GM12878 (cell line): ENCODE measurements at regions of chr14 and their contacts with region 1.

Region 1: DNA sequence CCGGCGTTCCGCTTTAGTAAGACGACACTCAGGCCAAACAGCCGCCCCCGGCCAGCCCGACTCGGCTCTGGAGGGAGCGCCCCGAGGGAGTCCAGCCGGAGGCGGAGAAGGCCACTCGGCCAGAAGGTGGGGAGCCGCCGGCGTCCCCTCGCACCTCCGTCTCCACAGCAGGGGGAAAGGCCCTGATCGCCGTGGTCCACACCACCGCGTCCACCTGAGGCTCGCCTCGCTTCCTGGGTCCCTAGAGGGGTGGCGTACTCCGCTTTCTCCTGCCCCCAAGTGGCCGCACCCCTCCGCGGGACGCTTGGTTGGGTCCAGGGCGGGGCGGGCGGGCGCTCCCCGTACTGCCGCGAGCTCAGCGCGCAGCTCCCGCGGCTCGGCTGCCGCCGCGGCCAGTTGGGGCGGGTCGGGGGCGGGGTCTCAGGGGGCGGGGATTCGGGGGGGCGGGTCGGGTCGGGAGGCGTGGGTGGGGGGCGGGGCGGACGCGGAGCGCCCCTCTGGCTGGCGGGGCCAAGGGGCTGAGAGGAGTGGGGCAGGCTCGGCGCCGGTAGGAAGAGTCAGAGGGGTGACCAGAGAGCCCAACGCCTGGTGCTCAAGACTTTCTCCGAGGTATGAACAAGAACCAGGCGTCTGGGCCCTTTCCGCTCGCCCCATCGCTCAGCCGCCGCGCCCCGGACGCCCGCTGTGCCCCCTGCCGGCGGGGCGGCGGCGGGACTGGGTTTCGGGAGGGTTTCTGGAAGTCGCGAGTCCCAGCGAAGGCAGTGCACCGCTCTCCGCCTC is at the start of gene FRMD6:
- DNase-seq: peak; percentile 26
- ATAC-seq: peak; percentile 90
- H3K4me3 ChIP-seq: peak within 1 kb of the TSS; percentile 84
- H3K27ac ChIP-seq: peak within 1 kb of the TSS; percentile 41
- H3K4me1 ChIP-seq: no peaks in the 10 kb centered on the region
- H3K27me3 ChIP-seq: peaks cover 3 to 9% of the 10 kb centered on the region in 2 experiments; a peak in 3 of 4 replicates
- CTCF ChIP-seq: peak; percentile 54 to 80 (median 68)
- EP300 ChIP-seq: no peak
- POLR2A ChIP-seq: peak; percentile 82; the same call in 1 of the 2 replicates
- RAD21 ChIP-seq: peak; percentile 59
- polyA plus RNA-seq, gene FRMD6: 1.1 to 1.6 TPM

Region 2: GRCh38 chr14:51283402-51284085 is 368.0 kb before region 1 on chr14:
- CTCF ChIA-PET with region 1: interaction called, 4 read pairs
- POLR2A ChIA-PET with region 1: no interaction called
- RAD21 ChIA-PET with region 1: no interaction called
- SMC1A ChIA-PET with region 1: no interaction called
- in situ Hi-C with region 1: no loop called
- intact Hi-C with region 1: loop called (anchors 5 kb)
- DNase-seq: no peak
- ATAC-seq: peak; percentile 55; the same call in 2 of the 3 replicates
- H3K4me3 ChIP-seq: no peak overlapping the region
- H3K27ac ChIP-seq: no peak overlapping the region
- H3K4me1 ChIP-seq: peaks cover 8% of the 10 kb centered on the region
- H3K27me3 ChIP-seq: no peaks in the 10 kb centered on the region
- CTCF ChIP-seq: peak; percentile 53 to 74 (median 55); a peak in 5 of 6 replicates
- EP300 ChIP-seq: no peak
- POLR2A ChIP-seq: no peak
- RAD21 ChIP-seq: peak; percentile 71

Region 3: DNA sequence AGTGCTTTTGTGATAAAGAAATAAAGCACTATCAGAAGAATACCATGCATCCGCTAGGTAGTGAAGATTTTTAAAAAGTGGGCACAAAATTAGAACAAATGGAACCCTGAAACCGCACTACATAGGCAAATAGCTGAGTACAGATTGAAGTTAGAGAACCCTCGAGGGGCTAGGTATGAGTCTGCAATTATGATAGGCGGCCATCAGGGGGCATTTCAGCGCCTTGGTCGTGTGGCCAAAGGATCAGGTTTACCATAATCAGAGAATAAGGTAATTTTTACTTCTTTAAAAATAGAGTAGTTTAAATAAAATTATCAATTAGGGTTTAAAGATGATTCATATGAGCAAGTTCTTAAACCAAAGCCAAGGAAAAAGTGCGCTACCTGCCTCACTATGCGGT is 281.8 kb before region 1 on chr14:
- CTCF ChIA-PET with region 1: no interaction called
- POLR2A ChIA-PET with region 1: no interaction called
- RAD21 ChIA-PET with region 1: no interaction called
- SMC1A ChIA-PET with region 1: no interaction called
- in situ Hi-C with region 1: no loop called
- intact Hi-C with region 1: loop called (anchors 5 kb)
- DNase-seq: no peak
- ATAC-seq: peak; percentile 42; the same call in 2 of the 3 replicates
- H3K4me3 ChIP-seq: no peak overlapping the region
- H3K27ac ChIP-seq: no peak overlapping the region
- H3K4me1 ChIP-seq: no peaks in the 10 kb centered on the region
- H3K27me3 ChIP-seq: no peaks in the 10 kb centered on the region
- CTCF ChIP-seq: peak; percentile 28 to 45 (median 44); a peak in 5 of 6 replicates
- EP300 ChIP-seq: no peak
- POLR2A ChIP-seq: no peak
- RAD21 ChIP-seq: peak; percentile 61

Region 4: DNA sequence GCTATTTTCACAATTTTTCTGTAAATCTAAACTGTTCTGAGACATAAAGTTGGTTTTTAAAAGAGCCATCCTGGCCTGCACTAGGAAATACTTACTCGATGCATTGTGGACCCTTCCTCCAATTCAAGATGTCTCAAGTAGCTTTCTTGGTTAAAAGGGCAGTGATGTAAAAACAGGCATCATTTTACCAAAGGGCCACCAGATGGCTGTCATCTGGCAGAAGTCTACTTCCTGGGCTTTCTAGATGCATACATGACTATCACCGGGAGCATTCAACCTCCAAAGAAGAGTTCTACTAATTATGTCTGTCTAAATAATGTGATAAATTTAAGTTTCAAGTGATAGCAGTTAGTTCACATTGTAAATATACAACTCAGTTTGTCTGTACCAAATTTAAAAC is 96.6 kb before region 1 on chr14:
- CTCF ChIA-PET with region 1: no interaction called
- POLR2A ChIA-PET with region 1: no interaction called
- RAD21 ChIA-PET with region 1: no interaction called
- SMC1A ChIA-PET with region 1: no interaction called
- in situ Hi-C with region 1: no loop called
- intact Hi-C with region 1: loop called (anchors 5 kb)
- DNase-seq: no peak
- ATAC-seq: peak; percentile 37; the same call in 2 of the 3 replicates
- H3K4me3 ChIP-seq: no peak overlapping the region
- H3K27ac ChIP-seq: no peak overlapping the region
- H3K4me1 ChIP-seq: no peaks in the 10 kb centered on the region
- H3K27me3 ChIP-seq: peaks cover 2 to 3% of the 10 kb centered on the region in 2 experiments; a peak in 2 of 4 replicates
- CTCF ChIP-seq: peak in 2 of 3 experiments; percentile 28 to 29; a peak in 4 of 6 replicates
- EP300 ChIP-seq: no peak
- POLR2A ChIP-seq: no peak
- RAD21 ChIP-seq: peak; percentile 55

Region 5: GRCh38 chr14:51989293-51990234 is 338.0 kb after region 1 on chr14 and contains the start of gene RTRAF:
- CTCF ChIA-PET with region 1: no interaction called
- POLR2A ChIA-PET with region 1: no interaction called
- RAD21 ChIA-PET with region 1: no interaction called
- SMC1A ChIA-PET with region 1: no interaction called
- in situ Hi-C with region 1: no loop called
- intact Hi-C with region 1: loop called (anchors 10 kb)
- DNase-seq: peak; percentile 69
- ATAC-seq: peak; percentile 95
- H3K4me3 ChIP-seq: peak within 1 kb of the TSS; percentile 89
- H3K27ac ChIP-seq: peak within 1 kb of the TSS; percentile 88
- H3K4me1 ChIP-seq: peaks cover 6% of the 10 kb centered on the region
- H3K27me3 ChIP-seq: no peaks in the 10 kb centered on the region
- CTCF ChIP-seq: no peak
- EP300 ChIP-seq: no peak
- POLR2A ChIP-seq: peak; percentile 97
- RAD21 ChIP-seq: no peak
- polyA plus RNA-seq, gene RTRAF: 358 to 395 TPM